ENCODE measurements at regions of chr15 and their contacts with region 1.

Region 1: GRCh38 chr15:49876401-49877038 is 242.5 kb downstream of the ATP8B4 start:
- DNase-seq: peak in 1 of 2 donors; percentile 27
- ATAC-seq: peak; percentile 61 to 64
- H3K4me3 ChIP-seq: no peak overlapping the region
- H3K27ac ChIP-seq: peak overlapping the region; percentile 56 to 73 (median 68)
- H3K4me1 ChIP-seq: peaks cover 0 to 7% of the 10 kb centered on the region in 2 donors
- H3K27me3 ChIP-seq: no peaks in the 10 kb centered on the region
- CTCF ChIP-seq: peak in 2 of 5 experiments; percentile 27 to 39
- POLR2A ChIP-seq: no peak

Region 2: GRCh38 chr15:49855917-49856637 is 20.4 kb before region 1 on chr15:
- in situ Hi-C with region 1: no loop called
- intact Hi-C with region 1: no loop called
- DNase-seq: peak in 1 of 2 donors; percentile 12
- ATAC-seq: peak; percentile 73 to 80
- H3K4me3 ChIP-seq: no peak overlapping the region
- H3K27ac ChIP-seq: peak overlapping the region; percentile 20 to 43 (median 27)
- H3K4me1 ChIP-seq: no peaks in the 10 kb centered on the region
- H3K27me3 ChIP-seq: no peaks in the 10 kb centered on the region
- CTCF ChIP-seq: no peak
- POLR2A ChIP-seq: no peak

Region 3: DNA sequence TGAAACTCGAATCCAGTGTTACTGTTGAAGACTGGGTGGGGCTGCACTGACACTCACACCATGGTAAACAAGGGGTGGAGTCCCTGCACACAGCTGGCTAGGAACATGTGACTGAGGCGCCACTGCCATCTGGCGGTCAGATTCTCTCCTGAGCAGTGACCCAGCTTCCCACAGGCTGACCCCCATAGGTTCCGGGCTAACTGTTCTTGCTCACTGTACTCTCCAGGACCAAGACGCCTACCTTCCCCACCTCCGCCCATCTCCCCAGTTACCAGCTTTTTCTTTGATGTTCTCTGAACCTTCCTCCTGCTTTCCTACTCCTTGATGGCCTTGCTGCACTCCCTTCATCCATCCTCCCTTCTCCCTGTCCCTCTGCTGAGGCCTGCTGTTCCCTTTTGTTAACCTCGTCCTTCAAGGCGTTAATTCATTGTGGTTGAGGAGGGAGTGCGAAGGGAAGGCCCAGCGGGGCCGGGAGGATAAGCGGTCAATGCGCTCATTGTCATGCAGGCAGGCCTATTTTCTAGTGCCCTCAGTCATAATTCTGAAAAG is 127.3 kb after region 1 on chr15:
- in situ Hi-C with region 1: no loop called
- intact Hi-C with region 1: loop called (anchors 1 kb)
- DNase-seq: peak; percentile 28 to 67
- ATAC-seq: peak; percentile 82
- H3K4me3 ChIP-seq: no peak overlapping the region
- H3K27ac ChIP-seq: no peak overlapping the region
- H3K4me1 ChIP-seq: peaks cover 0 to 3% of the 10 kb centered on the region in 2 donors
- H3K27me3 ChIP-seq: no peaks in the 10 kb centered on the region
- CTCF ChIP-seq: peak; percentile 10 to 60 (median 56)
- POLR2A ChIP-seq: no peak

Region 4: DNA sequence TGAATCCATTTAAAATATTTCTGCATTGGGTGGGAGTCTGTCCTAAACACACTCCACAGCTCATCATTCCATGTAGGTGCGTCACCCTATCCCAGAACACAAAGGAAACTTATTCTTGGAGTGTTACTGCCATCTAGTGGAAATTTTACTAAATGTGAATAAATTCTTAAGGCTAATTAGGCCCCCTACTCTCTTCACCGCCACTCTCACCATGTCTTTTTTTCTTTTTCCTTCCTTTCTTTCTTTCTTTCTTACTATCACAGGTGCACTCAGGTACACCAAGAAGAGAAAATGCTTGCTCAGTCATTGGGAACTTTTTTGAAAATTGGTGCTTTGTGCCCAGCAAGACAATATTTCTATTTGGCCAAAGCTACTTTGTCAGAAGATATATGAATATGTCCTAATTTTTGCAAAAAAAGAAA is 268.9 kb after region 1 on chr15:
- in situ Hi-C with region 1: no loop called
- intact Hi-C with region 1: no loop called
- DNase-seq: no peak
- ATAC-seq: peak; percentile 65 to 76
- H3K4me3 ChIP-seq: no peak overlapping the region
- H3K27ac ChIP-seq: no peak overlapping the region
- H3K4me1 ChIP-seq: no peaks in the 10 kb centered on the region
- H3K27me3 ChIP-seq: no peaks in the 10 kb centered on the region
- CTCF ChIP-seq: peak; percentile 30 to 62 (median 60)
- POLR2A ChIP-seq: no peak

Measured in gastrocnemius medialis (tissue), 4 donors.